Tibial artery (tissue), 4 donors: ENCODE measurements at regions of chr12 and their contacts with region 1.

Region 1: DNA sequence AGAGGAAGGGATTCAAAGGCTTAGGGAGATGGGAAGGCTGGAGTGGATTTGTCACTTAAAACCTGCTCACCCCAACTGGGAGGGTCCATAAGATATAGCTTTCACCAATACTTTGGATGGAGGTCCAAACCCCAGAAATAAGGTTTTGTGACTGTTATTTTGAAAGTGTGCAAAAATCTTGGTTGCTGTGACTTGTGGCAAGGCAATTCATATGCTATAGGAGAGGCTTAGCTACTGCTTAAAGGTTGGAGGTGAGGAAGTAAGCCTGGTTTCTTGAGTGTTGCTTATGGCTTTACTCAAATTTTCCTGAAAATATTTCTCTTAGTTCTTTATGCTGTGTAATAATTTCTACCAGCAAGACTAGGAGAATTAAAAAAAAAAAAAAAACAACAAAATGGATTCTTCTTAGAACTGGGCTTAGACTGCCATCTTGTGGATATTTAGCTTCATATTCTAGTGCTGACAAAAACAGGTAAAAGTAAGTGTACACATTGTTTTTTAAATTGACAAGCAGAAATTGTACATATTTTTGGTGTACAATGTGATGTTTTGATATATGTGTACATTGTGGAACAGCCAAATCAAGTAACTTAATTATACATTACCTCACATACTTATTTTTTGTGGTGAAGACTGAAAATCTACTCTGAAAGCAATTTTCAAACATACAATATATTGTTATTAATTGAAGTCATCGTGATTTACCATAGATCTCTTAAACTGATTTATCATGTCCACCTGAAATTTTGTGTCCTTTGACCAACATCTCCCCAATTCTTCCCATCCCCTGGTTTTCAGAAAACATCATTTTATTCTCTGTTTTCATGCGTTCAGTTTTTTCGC is 23.0 kb downstream of the PDE6H start:
- DNase-seq: no peak
- H3K4me3 ChIP-seq: no peak overlapping the region
- H3K27ac ChIP-seq: peak overlapping the region in 1 of 2 donors; percentile 3
- H3K4me1 ChIP-seq: peaks cover 0 to 31% (median 11%) of the 10 kb centered on the region in 4 donors
- H3K27me3 ChIP-seq: no peaks in the 10 kb centered on the region
- CTCF ChIP-seq: peak; percentile 41 to 80

Region 2: DNA sequence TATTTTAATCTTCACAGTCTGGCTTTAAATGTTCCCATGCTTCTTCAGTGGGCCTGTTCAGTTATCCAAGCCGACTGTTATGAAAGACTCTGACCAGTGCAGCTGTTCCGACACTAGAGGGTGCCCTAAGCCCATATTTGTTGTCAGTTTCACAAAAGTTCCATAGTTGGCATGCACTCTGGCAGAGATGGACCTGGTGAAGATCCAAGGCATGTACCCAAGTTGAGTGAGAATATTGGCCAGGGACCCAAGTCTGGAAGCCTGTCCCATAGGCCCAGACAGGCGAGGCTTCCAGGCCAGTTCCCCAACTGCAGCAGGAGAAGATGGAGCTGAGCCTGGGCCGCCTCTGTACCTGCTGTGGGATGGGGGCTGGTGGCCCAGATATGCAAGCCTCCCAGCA is 272.0 kb before region 1 on chr12:
- intact Hi-C with region 1: loop called (anchors 5 kb)
- DNase-seq: peak; percentile 23 to 70
- H3K4me3 ChIP-seq: no peak overlapping the region
- H3K27ac ChIP-seq: no peak overlapping the region
- H3K4me1 ChIP-seq: no peaks in the 10 kb centered on the region
- H3K27me3 ChIP-seq: no peaks in the 10 kb centered on the region
- CTCF ChIP-seq: peak; percentile 58 to 71